HCT116 (cell line): ENCODE measurements at regions of chr11 and their contacts with region 1.

Region 1: GRCh38 chr11:85854557-85855340 is 434 bp upstream of the CCDC83 start:
- DNase-seq: peak; percentile 72
- ATAC-seq: peak; percentile 97
- H3K4me3 ChIP-seq: peak overlapping the region; percentile 25 to 50
- H3K27ac ChIP-seq: no peak overlapping the region
- H3K4me1 ChIP-seq: peaks cover 2 to 14% of the 10 kb centered on the region in 2 experiments; a peak in 3 of 4 replicates
- H3K27me3 ChIP-seq: no peaks in the 10 kb centered on the region
- CTCF ChIP-seq: peak; percentile 56 to 91 (median 58)
- POLR2A ChIP-seq: no peak
- RAD21 ChIP-seq: peak; percentile 99

Region 2: GRCh38 chr11:85866137-85866827 is 11.5 kb after region 1 on chr11:
- CTCF ChIA-PET with region 1: interaction called, 11 read pairs
- POLR2A ChIA-PET with region 1: no interaction called
- RAD21 ChIA-PET with region 1: interaction called in 1 of 2 experiments, 6 read pairs
- intact Hi-C with region 1: no loop called
- DNase-seq: no peak
- ATAC-seq: no peak
- H3K4me3 ChIP-seq: no peak overlapping the region
- H3K27ac ChIP-seq: no peak overlapping the region
- H3K4me1 ChIP-seq: no peaks in the 10 kb centered on the region
- H3K27me3 ChIP-seq: no peaks in the 10 kb centered on the region
- CTCF ChIP-seq: no peak
- POLR2A ChIP-seq: no peak
- RAD21 ChIP-seq: no peak

Region 3: GRCh38 chr11:86193297-86194095 is 338.7 kb after region 1 on chr11:
- CTCF ChIA-PET with region 1: interaction called, 23 read pairs
- POLR2A ChIA-PET with region 1: no interaction called
- RAD21 ChIA-PET with region 1: no interaction called
- intact Hi-C with region 1: no loop called
- DNase-seq: peak; percentile 86
- ATAC-seq: peak; percentile 100
- H3K4me3 ChIP-seq: peak overlapping the region; percentile 20 to 32; a peak in 3 of 4 replicates
- H3K27ac ChIP-seq: no peak overlapping the region
- H3K4me1 ChIP-seq: peaks cover 4 to 22% of the 10 kb centered on the region in 2 experiments; a peak in 3 of 4 replicates
- H3K27me3 ChIP-seq: no peaks in the 10 kb centered on the region
- CTCF ChIP-seq: peak; percentile 80 to 85 (median 84); a peak in 5 of 6 replicates
- POLR2A ChIP-seq: no peak
- RAD21 ChIP-seq: peak; percentile 86

Region 4: DNA sequence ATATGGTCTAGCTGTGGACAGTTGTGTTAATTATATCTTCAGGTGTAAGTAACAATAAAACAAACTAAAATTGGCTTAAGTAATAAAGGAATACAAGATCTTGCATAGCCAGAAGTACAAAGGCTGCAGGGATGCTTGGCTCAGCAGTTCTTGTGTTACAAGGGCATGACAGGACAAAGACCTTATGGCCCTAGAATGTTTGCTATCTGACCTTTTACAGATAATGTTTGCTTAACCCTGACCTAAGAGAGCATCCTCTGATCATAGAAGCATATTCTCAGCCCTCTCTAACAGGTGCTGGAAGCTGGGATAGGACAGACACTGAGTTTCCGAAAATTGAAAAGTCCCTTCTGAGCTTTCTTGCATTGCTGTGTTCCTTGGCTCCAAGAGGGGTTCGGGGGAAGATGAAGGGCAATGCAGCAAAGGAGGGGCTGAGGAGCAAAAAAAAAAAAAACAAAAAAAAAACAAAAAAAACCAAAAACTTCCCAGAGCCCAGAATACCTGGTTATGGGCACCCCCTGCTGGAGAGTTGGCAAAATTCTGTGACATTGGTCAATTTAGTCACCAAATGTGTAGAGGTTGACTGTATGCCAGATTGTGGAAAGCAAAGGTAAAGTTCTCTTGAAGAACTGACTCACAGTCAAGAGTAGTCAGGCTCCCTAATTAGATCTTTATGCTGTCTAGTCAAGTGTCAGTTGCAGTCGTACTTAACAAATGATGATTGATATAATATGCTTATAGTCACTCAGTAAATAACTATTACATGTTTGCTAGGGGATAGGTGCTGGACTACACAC is 436.9 kb after region 1 on chr11:
- CTCF ChIA-PET with region 1: interaction called, 12 read pairs
- POLR2A ChIA-PET with region 1: interaction called, 3 read pairs
- RAD21 ChIA-PET with region 1: interaction called, 3 read pairs
- intact Hi-C with region 1: loop called (anchors 1 kb)
- DNase-seq: peak; percentile 39
- ATAC-seq: peak; percentile 74
- H3K4me3 ChIP-seq: no peak overlapping the region
- H3K27ac ChIP-seq: no peak overlapping the region
- H3K4me1 ChIP-seq: no peaks in the 10 kb centered on the region
- H3K27me3 ChIP-seq: no peaks in the 10 kb centered on the region
- CTCF ChIP-seq: peak; percentile 76 to 86 (median 77)
- POLR2A ChIP-seq: no peak
- RAD21 ChIP-seq: peak; percentile 85

Region 5: GRCh38 chr11:86456052-86456939 is 601.5 kb after region 1 on chr11:
- CTCF ChIA-PET with region 1: interaction called, 3 read pairs
- POLR2A ChIA-PET with region 1: no interaction called
- RAD21 ChIA-PET with region 1: no interaction called
- intact Hi-C with region 1: loop called (anchors 10 kb)
- DNase-seq: peak; percentile 67
- ATAC-seq: peak; percentile 86
- H3K4me3 ChIP-seq: no peak overlapping the region
- H3K27ac ChIP-seq: no peak overlapping the region
- H3K4me1 ChIP-seq: peaks cover 14 to 15% of the 10 kb centered on the region in 2 experiments
- H3K27me3 ChIP-seq: no peaks in the 10 kb centered on the region
- CTCF ChIP-seq: peak; percentile 86 to 97 (median 96)
- POLR2A ChIP-seq: no peak
- RAD21 ChIP-seq: peak; percentile 98

Region 6: GRCh38 chr11:86818466-86819192 is 963.9 kb after region 1 on chr11:
- CTCF ChIA-PET with region 1: no interaction called
- POLR2A ChIA-PET with region 1: no interaction called
- RAD21 ChIA-PET with region 1: no interaction called
- intact Hi-C with region 1: loop called (anchors 5 kb)
- DNase-seq: peak; percentile 52
- ATAC-seq: peak; percentile 65
- H3K4me3 ChIP-seq: no peak overlapping the region
- H3K27ac ChIP-seq: no peak overlapping the region
- H3K4me1 ChIP-seq: peaks cover 0 to 11% of the 10 kb centered on the region in 2 experiments; a peak in 2 of 4 replicates
- H3K27me3 ChIP-seq: no peaks in the 10 kb centered on the region; the same call in 1 of the 2 replicates
- CTCF ChIP-seq: peak; percentile 51 to 93 (median 83)
- POLR2A ChIP-seq: no peak
- RAD21 ChIP-seq: peak; percentile 97